H1 (cell line): ENCODE measurements at regions of chr14 and their contacts with region 1.

Region 1: GRCh38 chr14:75636100-75636692 is 24.5 kb downstream of the ERG28 start:
- DNase-seq: no peak
- H3K4me3 ChIP-seq: no peak overlapping the region
- H3K27ac ChIP-seq: no peak overlapping the region
- H3K4me1 ChIP-seq: peaks cover 4 to 19% (median 14%) of the 10 kb centered on the region in 4 experiments
- H3K27me3 ChIP-seq: no peaks in the 10 kb centered on the region
- CTCF ChIP-seq: no peak
- EP300 ChIP-seq: no peak
- POLR2A ChIP-seq: no peak
- RAD21 ChIP-seq: no peak

Region 2: DNA sequence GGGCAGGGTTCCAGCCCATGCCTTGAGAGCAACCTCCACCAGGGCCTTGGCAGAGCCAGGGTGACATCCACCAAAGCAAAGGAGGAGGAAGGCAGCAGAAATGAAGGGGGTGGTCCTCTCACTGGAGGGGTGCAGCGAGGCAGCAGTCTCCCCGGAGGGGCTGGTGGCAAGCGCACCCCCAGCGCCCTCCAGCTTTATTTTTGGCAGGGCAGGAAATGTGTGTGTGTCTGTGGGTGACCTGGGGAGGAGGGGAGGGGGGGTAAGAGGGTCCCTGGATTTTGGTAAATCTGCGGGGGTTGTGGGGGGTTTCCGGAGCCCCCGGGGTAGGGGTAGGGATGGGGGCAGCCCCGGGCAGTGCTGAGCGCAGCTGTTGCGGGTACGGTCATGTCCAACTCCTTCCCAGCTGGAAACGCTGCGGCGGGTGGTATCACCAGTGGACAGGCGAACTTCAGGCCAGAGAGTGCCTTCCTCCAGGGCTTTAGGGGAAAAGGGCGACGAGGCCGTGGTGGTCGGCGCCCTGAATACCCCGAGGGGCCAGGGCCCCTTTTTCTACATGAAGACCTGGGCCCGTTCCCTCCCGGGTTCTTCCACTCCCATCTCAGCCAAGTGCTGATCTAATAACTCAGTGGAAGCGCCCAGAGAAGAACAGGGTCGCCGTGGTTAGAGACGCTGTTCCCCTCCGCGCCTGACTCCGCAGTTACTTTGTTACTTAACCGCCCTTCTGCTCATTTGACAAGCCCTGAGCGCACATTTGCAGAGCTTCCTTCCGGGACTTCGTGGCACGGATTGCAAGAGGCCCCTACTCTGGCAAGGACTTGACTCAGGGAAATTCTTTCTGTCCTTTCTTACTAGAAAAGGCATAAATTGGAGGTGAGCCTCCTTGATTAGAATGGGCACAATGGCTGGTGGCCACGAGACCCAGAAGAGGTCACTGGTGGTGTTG is 302.3 kb before region 1 on chr14:
- CTCF ChIA-PET with region 1: no interaction called
- POLR2A ChIA-PET with region 1: no interaction called
- DNase-seq: no peak
- H3K4me3 ChIP-seq: no peak overlapping the region
- H3K27ac ChIP-seq: no peak overlapping the region
- H3K4me1 ChIP-seq: no peaks in the 10 kb centered on the region
- H3K27me3 ChIP-seq: no peaks in the 10 kb centered on the region
- CTCF ChIP-seq: no peak
- EP300 ChIP-seq: no peak
- POLR2A ChIP-seq: no peak
- RAD21 ChIP-seq: no peak

Region 3: DNA sequence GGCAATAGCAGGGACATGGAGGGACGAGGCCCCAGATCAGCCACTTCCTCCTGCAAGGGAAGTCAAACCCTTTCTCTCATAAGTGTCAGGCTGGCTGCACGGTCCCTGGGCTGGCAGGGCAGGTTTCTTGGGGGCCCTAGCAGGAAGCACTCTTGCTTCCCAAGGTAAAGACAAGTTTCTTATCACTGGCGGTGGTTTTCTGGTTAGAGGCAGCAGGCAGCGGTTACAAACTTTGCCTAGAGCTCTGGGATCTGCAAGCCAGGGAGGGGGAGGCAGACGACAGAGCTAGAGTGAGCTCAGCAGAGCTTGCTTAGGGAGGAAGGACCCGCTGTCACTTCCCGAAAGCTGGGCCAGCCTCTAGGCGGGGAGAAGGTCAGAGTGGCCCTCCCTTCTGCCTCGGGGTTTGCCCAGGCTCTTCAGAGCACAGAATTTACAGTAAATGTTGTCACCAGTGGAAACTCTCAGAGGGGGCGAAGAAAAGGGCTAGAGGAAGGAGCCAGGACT is 93.6 kb before region 1 on chr14:
- CTCF ChIA-PET with region 1: no interaction called
- POLR2A ChIA-PET with region 1: no interaction called
- DNase-seq: no peak
- H3K4me3 ChIP-seq: no peak overlapping the region
- H3K27ac ChIP-seq: no peak overlapping the region
- H3K4me1 ChIP-seq: peaks cover 0 to 6% (median 4%) of the 10 kb centered on the region in 4 experiments; a peak in 4 of 7 replicates
- H3K27me3 ChIP-seq: no peaks in the 10 kb centered on the region
- CTCF ChIP-seq: no peak
- EP300 ChIP-seq: no peak
- POLR2A ChIP-seq: no peak
- RAD21 ChIP-seq: no peak

Region 4: GRCh38 chr14:75647650-75648049 is 11.5 kb after region 1 on chr14:
- CTCF ChIA-PET with region 1: interaction called, 14 read pairs
- POLR2A ChIA-PET with region 1: interaction called, 11 read pairs
- DNase-seq: no peak
- H3K4me3 ChIP-seq: no peak overlapping the region
- H3K27ac ChIP-seq: no peak overlapping the region
- H3K4me1 ChIP-seq: no peaks in the 10 kb centered on the region
- H3K27me3 ChIP-seq: no peaks in the 10 kb centered on the region
- CTCF ChIP-seq: no peak
- EP300 ChIP-seq: no peak
- POLR2A ChIP-seq: no peak
- RAD21 ChIP-seq: no peak

Region 5: DNA sequence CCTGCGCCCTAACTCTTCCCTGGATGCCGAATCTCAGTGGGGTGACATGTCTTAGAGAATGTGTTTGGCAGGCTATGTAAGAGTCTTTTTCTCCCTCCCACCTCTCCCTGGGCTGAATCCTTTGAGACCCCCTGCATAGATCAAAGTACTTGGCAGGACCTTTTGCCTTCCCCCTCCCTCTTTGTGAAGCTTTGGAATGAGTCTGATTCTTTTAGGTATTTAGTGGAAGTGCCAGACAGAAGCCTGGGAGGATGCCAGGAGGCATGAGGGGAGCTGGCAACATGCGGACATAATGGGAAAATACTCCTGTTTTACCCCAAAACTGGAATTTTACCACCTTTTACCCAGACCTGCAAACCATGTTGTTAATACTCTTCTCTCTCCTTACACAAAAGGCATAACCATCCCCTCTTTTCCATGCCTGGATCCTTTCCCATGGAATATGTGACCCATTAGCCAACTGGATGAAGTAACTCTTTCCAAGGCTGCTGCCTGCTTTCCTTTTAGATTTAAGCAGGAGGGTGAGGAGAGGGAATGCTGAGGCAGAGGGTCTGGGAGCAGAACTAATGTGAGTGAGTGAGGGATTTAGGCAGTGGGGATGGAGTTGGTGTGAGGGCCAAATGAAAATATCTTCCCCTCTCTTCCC is 66.5 kb after region 1 on chr14:
- CTCF ChIA-PET with region 1: no interaction called
- POLR2A ChIA-PET with region 1: no interaction called
- DNase-seq: no peak
- H3K4me3 ChIP-seq: no peak overlapping the region
- H3K27ac ChIP-seq: no peak overlapping the region
- H3K4me1 ChIP-seq: no peaks in the 10 kb centered on the region
- H3K27me3 ChIP-seq: no peaks in the 10 kb centered on the region
- CTCF ChIP-seq: no peak
- EP300 ChIP-seq: no peak
- POLR2A ChIP-seq: no peak
- RAD21 ChIP-seq: no peak